Heart left ventricle (tissue), 16 donors: ENCODE measurements at regions of chr4 and their contacts with region 1.

Region 1: GRCh38 chr4:139243448-139244365 is 36.3 kb downstream of the MGARP start:
- DNase-seq: no peak
- ATAC-seq: peak in 3 of 4 donors; percentile 60 to 86 (median 64)
- H3K4me3 ChIP-seq: no peak overlapping the region
- H3K27ac ChIP-seq: peak overlapping the region in 3 of 12 donors; percentile 13 to 57 (median 20)
- H3K4me1 ChIP-seq: peaks cover 0 to 3% (median 0%) of the 10 kb centered on the region in 12 donors
- H3K27me3 ChIP-seq: no peaks in the 10 kb centered on the region
- CTCF ChIP-seq: no peak
- POLR2A ChIP-seq: no peak

Region 2: GRCh38 chr4:139229534-139230039 is 14.1 kb before region 1 on chr4:
- intact Hi-C with region 1: loop called in 1 of 10 experiments (anchors 1 kb)
- DNase-seq: no peak
- ATAC-seq: peak in 2 of 4 donors; percentile 60 to 67
- H3K4me3 ChIP-seq: no peak overlapping the region
- H3K27ac ChIP-seq: no peak overlapping the region
- H3K4me1 ChIP-seq: no peaks in the 10 kb centered on the region
- H3K27me3 ChIP-seq: no peaks in the 10 kb centered on the region
- CTCF ChIP-seq: peak; percentile 53 to 78 (median 67)
- POLR2A ChIP-seq: no peak

Region 3: GRCh38 chr4:139312552-139313332 is 69.0 kb after region 1 on chr4:
- intact Hi-C with region 1: no loop called
- DNase-seq: no peak
- ATAC-seq: no peak
- H3K4me3 ChIP-seq: no peak overlapping the region
- H3K27ac ChIP-seq: peak overlapping the region in 1 of 12 donors; percentile 9
- H3K4me1 ChIP-seq: peaks cover 0 to 69% (median 17%) of the 10 kb centered on the region in 12 donors
- H3K27me3 ChIP-seq: no peaks in the 10 kb centered on the region
- CTCF ChIP-seq: no peak
- POLR2A ChIP-seq: no peak